ENCODE measurements at regions of chr19 and their contacts with region 1.

Region 1: DNA sequence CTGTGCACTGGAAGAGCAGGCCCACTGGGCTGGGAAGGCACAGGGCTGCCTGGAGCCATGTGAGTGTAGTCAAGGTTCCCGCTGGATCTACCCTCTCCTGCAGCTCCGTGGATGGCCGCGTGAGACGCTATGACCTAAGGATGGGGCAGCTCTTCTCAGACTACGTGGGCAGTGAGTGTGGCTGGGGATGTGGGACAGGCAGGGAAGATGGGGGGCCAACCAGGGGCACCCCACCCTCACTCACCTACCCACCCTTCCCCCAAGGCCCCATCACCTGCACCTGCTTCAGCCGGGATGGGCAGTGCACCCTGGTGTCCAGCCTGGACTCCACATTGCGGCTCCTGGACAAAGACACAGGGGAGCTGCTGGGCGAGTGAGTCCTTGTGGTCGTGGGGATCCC is 6.1 kb downstream of the WDR83 start:
- DNase-seq: no peak
- ATAC-seq: no peak
- H3K4me3 Mint-ChIP-seq: no peak overlapping the region
- H3K27ac Mint-ChIP-seq: no peak overlapping the region
- H3K4me1 Mint-ChIP-seq: peaks cover 34% of the 10 kb centered on the region
- H3K27me3 Mint-ChIP-seq: no peaks in the 10 kb centered on the region

Region 2: DNA sequence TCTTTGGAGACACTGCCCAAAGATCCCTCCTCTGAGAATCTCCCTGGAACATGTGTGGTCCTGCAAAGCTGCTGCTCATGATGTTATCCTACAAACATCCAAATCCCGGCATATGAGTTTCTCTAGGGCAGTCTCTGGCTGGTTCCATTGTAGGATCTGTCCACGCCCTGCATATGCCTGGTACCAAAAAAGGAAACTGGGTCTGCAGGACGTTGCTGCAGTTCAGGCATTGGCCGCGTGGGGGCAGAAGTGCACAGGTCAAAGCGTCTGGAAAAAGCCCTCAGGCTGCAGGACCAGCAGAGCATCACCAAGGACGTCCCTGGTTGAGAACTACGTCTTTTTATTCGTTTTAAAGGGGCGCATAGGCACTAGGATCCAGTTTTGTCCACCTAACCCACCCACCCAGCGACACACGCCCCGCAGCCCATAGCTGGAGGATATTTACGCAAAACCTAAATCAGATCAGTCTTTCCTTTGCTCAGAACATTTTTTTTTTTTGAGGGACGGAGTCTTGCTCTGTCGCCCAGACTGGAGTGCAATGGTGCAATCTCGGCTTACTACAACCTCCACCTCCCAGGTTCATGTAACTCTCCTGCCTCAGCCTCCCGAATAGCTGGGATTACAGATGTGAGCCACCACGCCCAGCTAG is 108.6 kb before region 1 on chr19:
- CTCF ChIA-PET with region 1: interaction called, 11 read pairs
- POLR2A ChIA-PET with region 1: interaction called, 4 read pairs
- DNase-seq: peak; percentile 93
- ATAC-seq: peak; percentile 93
- H3K4me3 Mint-ChIP-seq: no peak overlapping the region
- H3K27ac Mint-ChIP-seq: peak overlapping the region; percentile 4
- H3K4me1 Mint-ChIP-seq: peaks cover 7% of the 10 kb centered on the region
- H3K27me3 Mint-ChIP-seq: no peaks in the 10 kb centered on the region

Region 3: GRCh38 chr19:12610540-12611360 is 62.0 kb before region 1 on chr19 and contains the starts of genes ZNF490 and ZNF791:
- CTCF ChIA-PET with region 1: interaction called, 10 read pairs
- POLR2A ChIA-PET with region 1: no interaction called
- DNase-seq: peak; percentile 99
- ATAC-seq: peak; percentile 81
- H3K4me3 Mint-ChIP-seq: peak within 1 kb of the TSS; percentile 100
- H3K27ac Mint-ChIP-seq: peak within 1 kb of the TSS; percentile 99
- H3K4me1 Mint-ChIP-seq: peaks cover 34% of the 10 kb centered on the region
- H3K27me3 Mint-ChIP-seq: no peaks in the 10 kb centered on the region
- total RNA-seq, gene ZNF490: 16.2 to 16.5 TPM
- total RNA-seq, gene ZNF791: 26.6 to 29.4 TPM

Region 4: DNA sequence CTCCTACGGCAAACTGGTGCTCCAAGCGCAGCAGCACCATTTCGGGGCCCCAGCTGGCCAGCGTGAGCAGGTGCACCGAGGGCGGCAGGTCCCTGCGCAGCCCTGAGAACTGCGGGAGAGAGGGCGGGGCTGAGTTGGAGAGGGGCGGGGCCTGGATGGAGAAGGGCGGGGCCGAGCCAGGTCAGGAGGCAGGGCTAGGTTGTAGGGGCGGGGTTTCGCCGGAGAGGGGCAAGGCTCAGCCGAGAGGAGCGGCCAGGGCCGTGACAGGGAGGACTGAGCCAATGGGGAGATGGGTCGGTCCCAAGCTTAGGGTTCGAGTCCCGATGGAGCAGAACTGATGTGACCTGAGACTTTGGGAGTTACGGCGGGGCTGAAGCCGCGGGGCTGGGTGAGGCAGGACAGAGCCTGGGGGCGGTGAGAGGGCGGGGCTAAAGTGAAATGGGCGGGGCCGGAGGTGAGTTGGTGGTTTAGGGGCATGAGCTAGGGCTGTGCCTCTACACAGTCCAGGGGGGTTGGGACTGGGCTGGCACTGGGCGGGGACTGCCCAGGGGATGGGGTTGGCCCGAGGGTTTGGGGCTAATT is 25.2 kb before region 1 on chr19:
- CTCF ChIA-PET with region 1: no interaction called
- POLR2A ChIA-PET with region 1: no interaction called
- DNase-seq: no peak
- ATAC-seq: peak; percentile 70
- H3K4me3 Mint-ChIP-seq: no peak overlapping the region
- H3K27ac Mint-ChIP-seq: no peak overlapping the region
- H3K4me1 Mint-ChIP-seq: peaks cover 9% of the 10 kb centered on the region
- H3K27me3 Mint-ChIP-seq: no peaks in the 10 kb centered on the region

Region 5: DNA sequence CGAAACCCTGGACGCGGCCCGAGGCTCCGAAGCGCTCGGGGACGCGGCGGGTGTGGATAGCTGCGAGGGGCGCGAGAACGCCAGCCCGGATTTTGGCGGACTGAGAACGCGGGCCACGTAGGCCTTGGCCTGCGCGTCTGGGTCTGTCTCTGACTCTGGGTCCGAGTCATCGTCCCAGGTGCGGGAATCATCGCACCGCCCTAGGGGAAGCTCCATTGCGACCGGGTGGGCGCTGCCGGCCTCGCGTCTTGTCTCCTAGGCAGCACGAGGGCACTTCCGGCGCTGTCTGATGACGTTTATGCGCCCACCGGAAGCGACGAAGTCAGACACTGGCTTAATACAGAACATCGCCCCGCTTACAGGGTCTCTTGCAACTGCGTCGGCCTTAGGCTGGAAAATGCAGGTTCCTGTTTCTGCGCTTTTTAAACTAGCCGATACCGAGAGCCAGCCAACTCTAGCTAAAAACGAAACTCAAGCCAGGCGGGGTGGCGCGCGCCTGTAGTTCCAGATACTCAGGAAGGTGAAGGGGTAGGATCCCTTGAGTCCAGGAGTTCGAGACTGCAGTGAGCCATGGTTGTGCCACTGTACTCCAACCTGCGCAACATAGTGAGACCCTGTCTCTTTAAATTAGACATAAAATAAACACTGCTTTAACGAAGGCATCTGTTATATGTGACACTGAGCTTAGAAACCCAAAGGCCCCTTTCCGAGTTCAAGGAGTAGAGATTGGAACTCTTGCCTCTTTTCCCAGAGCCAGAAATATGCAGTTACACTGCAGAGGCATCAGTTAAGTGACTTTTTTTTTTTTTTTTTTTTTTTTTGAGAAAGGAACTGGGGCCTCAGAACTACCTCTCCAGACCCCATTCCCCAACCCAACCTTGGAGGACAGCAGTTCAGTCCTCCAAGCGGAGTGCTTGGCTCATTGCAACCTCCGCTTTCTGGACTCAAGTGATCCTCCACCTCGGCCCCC is 23.9 kb after region 1 on chr19 and contains the start of gene FBXW9:
- CTCF ChIA-PET with region 1: interaction called, 13 read pairs
- POLR2A ChIA-PET with region 1: interaction called, 5 read pairs
- DNase-seq: peak; percentile 98
- ATAC-seq: peak; percentile 90
- H3K4me3 Mint-ChIP-seq: peak within 1 kb of the TSS; percentile 89
- H3K27ac Mint-ChIP-seq: peak within 1 kb of the TSS; percentile 98
- H3K4me1 Mint-ChIP-seq: peaks cover 26% of the 10 kb centered on the region
- H3K27me3 Mint-ChIP-seq: no peaks in the 10 kb centered on the region
- total RNA-seq, gene FBXW9: 6.0 to 6.1 TPM

Region 6: GRCh38 chr19:12749938-12750521 is 77.3 kb after region 1 on chr19:
- CTCF ChIA-PET with region 1: no interaction called
- POLR2A ChIA-PET with region 1: no interaction called
- DNase-seq: no peak
- ATAC-seq: peak; percentile 25
- H3K4me3 Mint-ChIP-seq: no peak overlapping the region
- H3K27ac Mint-ChIP-seq: no peak overlapping the region
- H3K4me1 Mint-ChIP-seq: no peaks in the 10 kb centered on the region
- H3K27me3 Mint-ChIP-seq: peaks cover 12% of the 10 kb centered on the region